Activated T-helper 2 cell treated with anti-CD3 and anti-CD28 coated beads, Interferon-gamma antibody, Interleukin-2, Interleukin-4, amounts not matched to agents 10 μg/mL and 5 μg/mL and 100 μg/mL, durations not matched to agents 14 hours and 24 hours and 36 hours (primary cell): ENCODE measurements at regions of chrX and their contacts with region 1.

Region 1: DNA sequence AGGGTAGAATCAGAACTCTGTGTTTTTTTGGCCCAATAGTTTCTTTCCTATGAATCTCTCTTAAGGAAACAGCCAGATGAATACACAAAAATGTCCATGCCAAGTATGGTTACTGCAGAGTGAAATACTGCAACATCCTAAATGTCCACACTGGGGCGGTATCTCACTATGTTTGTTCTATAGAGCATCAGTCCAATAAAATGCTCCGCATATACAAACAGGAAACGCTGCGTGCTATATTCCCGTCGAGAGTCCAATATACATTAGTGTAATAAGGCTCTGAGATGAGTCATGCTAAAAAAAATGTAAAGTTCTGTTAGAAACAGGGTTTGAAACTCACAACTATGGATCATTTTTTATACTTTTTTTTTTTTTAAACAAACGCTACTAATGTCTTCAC is 72.9 kb upstream of the ENOX2 start:
- DNase-seq: no peak
- H3K4me3 Mint-ChIP-seq: no peak overlapping the region
- H3K27ac Mint-ChIP-seq: no peak overlapping the region
- H3K4me1 Mint-ChIP-seq: no peaks in the 10 kb centered on the region
- H3K27me3 Mint-ChIP-seq: peaks cover 4% of the 10 kb centered on the region

Region 2: DNA sequence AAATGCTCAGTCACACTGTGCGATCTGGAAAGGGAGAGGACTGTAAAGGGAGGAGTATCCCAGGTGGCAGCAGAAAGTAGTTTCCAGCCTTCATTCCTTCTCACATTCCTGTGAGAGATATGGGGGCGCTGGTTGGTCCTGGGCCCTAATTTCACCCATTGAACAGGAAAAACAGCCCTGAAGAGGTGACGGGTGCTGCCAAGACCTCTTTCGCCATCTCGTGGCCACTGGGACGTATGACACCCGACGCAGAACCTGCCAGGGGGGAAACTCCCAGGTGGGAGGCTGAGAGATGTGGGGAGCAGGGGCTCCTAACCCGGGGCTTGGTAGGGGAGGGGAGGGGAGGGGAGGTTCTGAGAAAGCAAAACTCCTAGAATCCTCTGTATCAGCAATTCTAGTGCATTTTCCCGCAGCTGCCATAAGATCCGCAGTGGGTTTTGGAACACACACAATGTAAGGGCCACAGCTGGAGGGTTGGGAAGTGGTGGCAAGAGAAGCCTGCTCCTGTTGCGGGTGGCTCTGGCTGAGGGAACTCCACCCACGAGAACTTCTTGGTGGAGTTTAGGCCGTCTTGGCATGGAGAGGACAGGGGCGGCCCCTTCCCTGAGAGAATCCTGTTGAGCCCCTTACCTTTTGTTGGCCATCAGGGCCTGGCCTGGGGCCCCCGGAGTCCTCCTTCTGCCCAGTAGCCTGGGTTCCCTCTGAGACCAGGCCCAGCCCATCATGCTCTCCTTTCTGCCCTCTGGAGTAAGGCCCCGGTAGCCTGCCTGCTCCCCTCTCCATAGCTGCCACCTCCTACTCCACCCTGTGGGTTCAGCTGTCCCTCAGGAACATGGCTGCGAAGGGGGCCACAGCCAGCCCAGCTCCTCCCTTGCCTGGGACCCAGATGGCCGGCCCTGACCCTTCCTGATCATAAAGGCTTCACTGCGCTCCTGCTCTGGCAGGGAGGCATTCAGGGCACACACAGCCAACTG is 702.0 kb after region 1 on chrX:
- intact Hi-C with region 1: loop called (anchors 5 kb)
- DNase-seq: peak; percentile 10
- H3K4me3 Mint-ChIP-seq: no peak overlapping the region
- H3K27ac Mint-ChIP-seq: no peak overlapping the region
- H3K4me1 Mint-ChIP-seq: no peaks in the 10 kb centered on the region
- H3K27me3 Mint-ChIP-seq: no peaks in the 10 kb centered on the region